Activated T-helper 2 cell treated with anti-CD3 and anti-CD28 coated beads, Interferon-gamma antibody, Interleukin-2, Interleukin-4, amounts not matched to agents 10 μg/mL and 5 μg/mL and 100 μg/mL, durations not matched to agents 14 hours and 24 hours and 36 hours (primary cell): ENCODE measurements at regions of chr3 and their contacts with region 1.

Region 1: DNA sequence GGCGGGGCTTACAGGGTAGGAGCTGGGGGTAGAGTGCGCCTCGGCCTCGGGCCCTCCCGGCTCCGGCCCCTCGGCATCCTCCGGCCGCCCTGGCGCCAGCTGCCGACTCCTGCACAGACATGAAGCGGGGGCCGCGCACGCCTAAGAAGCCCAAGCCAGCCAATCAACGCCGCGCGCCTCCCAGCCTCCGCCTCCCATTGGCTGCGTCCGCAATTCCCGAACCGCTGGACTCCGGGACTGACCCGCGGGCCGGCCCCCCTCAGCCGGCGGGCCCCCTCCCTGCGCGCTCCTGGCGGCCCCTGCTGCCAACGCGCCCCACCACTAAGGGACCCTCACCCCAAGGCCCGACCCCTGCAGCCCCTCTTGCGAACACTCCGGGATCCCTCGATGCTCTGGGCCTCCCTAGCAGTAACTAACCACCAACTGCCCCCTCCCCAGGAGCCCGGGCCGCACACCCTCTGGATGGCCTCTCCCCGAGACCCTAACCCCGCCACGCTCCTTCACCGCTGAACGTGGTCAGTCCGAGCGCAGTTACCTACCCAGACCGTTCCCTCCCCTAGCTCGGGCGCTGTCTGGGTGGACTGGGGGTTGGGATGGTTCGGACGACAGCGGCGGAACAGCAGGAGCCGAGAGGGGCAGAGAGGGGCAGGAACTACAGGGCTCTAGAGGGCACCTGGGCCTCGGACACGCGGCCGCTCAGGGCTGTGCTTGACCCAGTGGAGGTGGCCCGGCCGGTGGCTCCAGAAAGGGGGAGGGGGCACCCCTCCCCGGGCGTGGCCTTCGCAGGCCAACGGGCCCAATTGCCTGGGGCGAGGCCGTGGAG is 5.0 kb downstream of the GATA2 start:
- DNase-seq: no peak
- H3K4me3 Mint-ChIP-seq: peak overlapping the region; percentile 33
- H3K27ac Mint-ChIP-seq: no peak overlapping the region
- H3K4me1 Mint-ChIP-seq: peaks cover 19% of the 10 kb centered on the region
- H3K27me3 Mint-ChIP-seq: peaks cover 69% of the 10 kb centered on the region

Region 2: GRCh38 chr3:128075516-128076482 is 412.2 kb before region 1 on chr3:
- intact Hi-C with region 1: loop called (anchors 2 kb)
- DNase-seq: peak; percentile 77
- H3K4me3 Mint-ChIP-seq: peak overlapping the region; percentile 30
- H3K27ac Mint-ChIP-seq: no peak overlapping the region
- H3K4me1 Mint-ChIP-seq: peaks cover 13% of the 10 kb centered on the region
- H3K27me3 Mint-ChIP-seq: no peaks in the 10 kb centered on the region

Region 3: DNA sequence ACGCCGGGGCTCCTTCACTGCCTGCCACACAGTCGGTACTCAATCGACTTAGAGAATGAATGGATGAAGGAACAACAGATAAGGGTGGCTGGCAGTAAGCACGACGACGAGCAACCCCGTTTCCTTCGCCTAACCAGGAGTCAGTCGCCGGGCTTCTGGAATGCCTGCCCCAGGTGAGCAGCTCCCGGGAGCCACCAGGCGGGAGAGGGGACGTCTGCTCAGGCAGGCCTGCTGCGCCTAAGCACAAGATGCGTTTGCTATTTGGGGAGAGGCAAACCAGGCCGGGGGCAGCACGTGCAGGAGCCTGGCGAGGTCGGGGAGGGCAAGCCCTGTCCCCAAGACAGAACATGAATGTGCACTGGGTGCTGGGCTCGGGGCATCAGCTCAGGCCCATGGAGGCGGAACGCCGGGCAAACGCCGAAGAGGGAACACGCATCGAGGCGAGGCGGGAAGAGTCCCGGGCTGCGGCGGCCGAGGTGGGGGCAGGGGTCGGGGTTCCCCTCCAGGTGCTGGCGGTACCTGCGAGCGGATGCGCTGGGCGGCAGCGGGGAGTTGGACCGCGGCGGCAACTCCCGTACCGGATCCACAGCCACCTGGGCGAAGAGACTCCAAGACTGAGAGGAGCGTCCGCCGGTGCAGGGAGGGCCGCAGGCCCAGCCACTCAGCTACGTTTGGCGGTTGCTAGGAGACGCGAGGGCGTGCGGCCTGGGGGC is 505.6 kb after region 1 on chr3 and contains the start of gene CFAP92:
- intact Hi-C with region 1: loop called (anchors 10 kb)
- DNase-seq: peak; percentile 90
- H3K4me3 Mint-ChIP-seq: peak within 1 kb of the TSS; percentile 63
- H3K27ac Mint-ChIP-seq: no peak within 1 kb of the TSS
- H3K4me1 Mint-ChIP-seq: peaks cover 20% of the 10 kb centered on the region
- H3K27me3 Mint-ChIP-seq: peaks cover 9% of the 10 kb centered on the region
- total RNA-seq, gene CFAP92: 0.37 TPM in 1 of 2 replicates, not detected in the other

Region 4: GRCh38 chr3:129974585-129975037 is 1486.6 kb after region 1 on chr3 and contains the start of gene TRH:
- intact Hi-C with region 1: loop called (anchors 5 kb)
- DNase-seq: no peak
- H3K4me3 Mint-ChIP-seq: no peak within 1 kb of the TSS
- H3K27ac Mint-ChIP-seq: no peak within 1 kb of the TSS
- H3K4me1 Mint-ChIP-seq: peaks cover 5% of the 10 kb centered on the region
- H3K27me3 Mint-ChIP-seq: peaks cover 56% of the 10 kb centered on the region
- total RNA-seq, gene TRH: not detected in 2 replicates